WTC11 (cell line): ENCODE measurements at regions of chr6 and their contacts with region 1.

Region 1: DNA sequence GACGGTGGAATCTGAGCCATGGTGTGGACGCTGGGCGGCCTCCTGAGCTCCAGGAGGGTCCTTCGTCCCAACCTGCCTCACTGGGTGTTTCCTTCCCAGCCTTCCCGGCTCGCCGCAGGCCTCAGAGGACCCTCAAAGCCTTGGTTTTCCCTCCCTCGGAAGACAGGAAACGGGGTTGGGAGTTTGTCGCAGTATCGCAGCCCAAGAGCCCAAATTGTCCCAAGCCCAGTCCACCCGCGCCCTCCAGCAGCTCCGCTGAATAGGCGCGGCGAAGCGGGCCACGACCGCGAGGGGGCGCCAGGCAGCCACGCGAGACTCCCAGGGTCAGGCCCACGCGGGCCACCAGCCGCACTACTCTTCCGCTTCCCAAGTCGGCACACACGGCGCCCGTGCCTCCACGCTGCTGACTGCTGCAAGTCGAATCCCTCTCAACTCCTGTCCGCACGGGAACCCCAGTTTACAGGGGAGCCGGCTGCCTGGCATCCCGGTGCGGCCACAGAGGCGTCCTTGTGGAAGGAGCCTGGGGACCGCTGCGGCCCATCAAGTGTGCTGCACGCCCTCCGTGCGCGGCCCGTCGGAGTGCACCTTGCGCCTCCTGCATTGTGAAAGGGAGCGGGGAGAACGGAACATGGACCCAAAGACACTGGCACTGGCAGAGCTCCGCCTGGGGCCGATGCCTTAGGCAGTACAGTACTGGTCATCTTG is 40.4 kb upstream of the HMGA1 start:
- DNase-seq: peak; percentile 81
- ATAC-seq: peak; percentile 64
- H3K4me3 Mint-ChIP-seq: peak overlapping the region; percentile 65
- H3K27ac Mint-ChIP-seq: no peak overlapping the region
- H3K4me1 Mint-ChIP-seq: peaks cover 28% of the 10 kb centered on the region
- H3K27me3 Mint-ChIP-seq: peaks cover 4% of the 10 kb centered on the region
- CTCF ChIP-seq: peak; percentile 81

Region 2: GRCh38 chr6:34161857-34162515 is 34.3 kb before region 1 on chr6:
- CTCF ChIA-PET with region 1: interaction called, 22 read pairs
- POLR2A ChIA-PET with region 1: no interaction called
- DNase-seq: peak; percentile 7
- ATAC-seq: no peak
- H3K4me3 Mint-ChIP-seq: no peak overlapping the region
- H3K27ac Mint-ChIP-seq: no peak overlapping the region
- H3K4me1 Mint-ChIP-seq: no peaks in the 10 kb centered on the region
- H3K27me3 Mint-ChIP-seq: peaks cover 15% of the 10 kb centered on the region; the same call in 1 of the 2 replicates
- CTCF ChIP-seq: no peak

Region 3: GRCh38 chr6:34176261-34177031 is 19.8 kb before region 1 on chr6:
- CTCF ChIA-PET with region 1: interaction called, 11 read pairs
- POLR2A ChIA-PET with region 1: no interaction called
- DNase-seq: no peak
- ATAC-seq: no peak
- H3K4me3 Mint-ChIP-seq: no peak overlapping the region
- H3K27ac Mint-ChIP-seq: no peak overlapping the region
- H3K4me1 Mint-ChIP-seq: no peaks in the 10 kb centered on the region
- H3K27me3 Mint-ChIP-seq: no peaks in the 10 kb centered on the region; the same call in 1 of the 2 replicates
- CTCF ChIP-seq: no peak

Region 4: GRCh38 chr6:34218448-34219090 is 22.3 kb after region 1 on chr6:
- CTCF ChIA-PET with region 1: interaction called, 14 read pairs
- POLR2A ChIA-PET with region 1: interaction called, 4 read pairs
- DNase-seq: no peak
- ATAC-seq: no peak
- H3K4me3 Mint-ChIP-seq: no peak overlapping the region
- H3K27ac Mint-ChIP-seq: no peak overlapping the region
- H3K4me1 Mint-ChIP-seq: peaks cover 6% of the 10 kb centered on the region
- H3K27me3 Mint-ChIP-seq: no peaks in the 10 kb centered on the region
- CTCF ChIP-seq: no peak

Region 5: GRCh38 chr6:34223956-34224940 is 28.0 kb after region 1 on chr6:
- CTCF ChIA-PET with region 1: interaction called, 24 read pairs
- POLR2A ChIA-PET with region 1: interaction called, 5 read pairs
- DNase-seq: peak; percentile 92
- ATAC-seq: peak; percentile 85
- H3K4me3 Mint-ChIP-seq: peak overlapping the region; percentile 77
- H3K27ac Mint-ChIP-seq: peak overlapping the region; percentile 97
- H3K4me1 Mint-ChIP-seq: peaks cover 47% of the 10 kb centered on the region
- H3K27me3 Mint-ChIP-seq: no peaks in the 10 kb centered on the region; the same call in 1 of the 2 replicates
- CTCF ChIP-seq: no peak

Region 6: GRCh38 chr6:34236131-34236996 is 40.1 kb after region 1 on chr6 and contains the start of gene HMGA1:
- CTCF ChIA-PET with region 1: interaction called, 14 read pairs
- POLR2A ChIA-PET with region 1: interaction called, 16 read pairs
- DNase-seq: peak; percentile 88
- ATAC-seq: peak; percentile 34
- H3K4me3 Mint-ChIP-seq: peak within 1 kb of the TSS; percentile 93
- H3K27ac Mint-ChIP-seq: peak within 1 kb of the TSS; percentile 100
- H3K4me1 Mint-ChIP-seq: peaks cover 52% of the 10 kb centered on the region
- H3K27me3 Mint-ChIP-seq: no peaks in the 10 kb centered on the region
- CTCF ChIP-seq: no peak
- total RNA-seq, gene HMGA1: 2,446 to 2,677 TPM (median 2,610 TPM) in 3 replicates